SK-N-SH (cell line): ENCODE measurements at regions of chr22 and their contacts with region 1.

Region 1: GRCh38 chr22:24827296-24827695 is 21.3 kb downstream of the SGSM1 start:
- DNase-seq: no peak
- H3K4me3 ChIP-seq: no peak overlapping the region
- H3K27ac ChIP-seq: no peak overlapping the region
- H3K4me1 ChIP-seq: peaks cover 0 to 18% of the 10 kb centered on the region in 2 experiments; a peak in 1 of 4 replicates
- H3K27me3 ChIP-seq: no peaks in the 10 kb centered on the region
- CTCF ChIP-seq: no peak
- EP300 ChIP-seq: no peak
- RAD21 ChIP-seq: no peak

Region 2: DNA sequence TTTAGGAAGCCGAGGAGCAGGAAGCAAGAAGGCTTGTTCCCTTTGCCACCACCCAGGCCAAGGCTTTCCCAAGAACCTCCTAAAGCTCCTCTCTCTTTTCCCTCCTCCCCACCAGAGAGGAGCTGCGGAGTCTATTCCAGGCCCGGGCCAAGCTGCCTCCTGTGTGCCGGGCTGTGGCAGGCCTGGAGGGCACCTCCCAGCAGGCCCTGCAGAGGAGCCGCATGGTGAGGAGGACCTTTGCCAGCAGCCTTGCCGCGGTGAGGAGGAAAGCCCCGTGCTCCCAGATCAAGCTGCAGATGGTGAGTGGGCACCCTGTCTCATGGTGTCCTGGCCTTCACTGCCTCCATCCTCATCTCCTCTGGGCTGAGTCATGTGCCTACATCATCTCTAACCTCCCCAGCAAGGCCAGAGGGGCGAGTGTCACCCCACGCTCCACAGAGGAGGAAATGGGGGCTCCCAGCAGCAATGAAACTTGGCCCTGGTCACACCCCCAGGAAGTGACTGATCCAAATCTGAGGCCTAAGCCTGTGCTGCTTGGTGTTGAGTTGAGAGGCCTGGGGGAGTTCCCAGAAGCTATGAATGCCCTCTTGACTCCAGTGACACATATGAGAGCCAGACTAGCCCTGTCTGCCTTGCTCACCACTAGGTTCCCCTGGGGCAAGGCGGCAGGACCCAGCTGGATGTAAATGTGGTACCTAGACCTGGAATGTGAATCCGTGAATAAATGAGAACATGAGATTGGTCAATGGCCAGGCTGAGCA is 1018.9 kb after region 1 on chr22:
- CTCF ChIA-PET with region 1: no interaction called
- POLR2A ChIA-PET with region 1: interaction called, 12 read pairs
- DNase-seq: no peak
- H3K4me3 ChIP-seq: no peak overlapping the region
- H3K27ac ChIP-seq: no peak overlapping the region
- H3K4me1 ChIP-seq: no peaks in the 10 kb centered on the region
- H3K27me3 ChIP-seq: no peaks in the 10 kb centered on the region
- CTCF ChIP-seq: no peak
- EP300 ChIP-seq: no peak
- RAD21 ChIP-seq: no peak